Heart left ventricle (tissue), 16 donors: ENCODE measurements at regions of chr20 and their contacts with region 1.

Region 1: GRCh38 chr20:45254869-45255266 is 504 bp upstream of the SLPI start:
- DNase-seq: no peak
- ATAC-seq: peak in 2 of 4 donors; percentile 31 to 67
- H3K4me3 ChIP-seq: no peak overlapping the region
- H3K27ac ChIP-seq: no peak overlapping the region
- H3K4me1 ChIP-seq: peaks cover 0 to 16% (median 0%) of the 10 kb centered on the region in 12 donors
- H3K27me3 ChIP-seq: peaks cover 0 to 17% (median 0%) of the 10 kb centered on the region in 9 donors
- CTCF ChIP-seq: no peak
- POLR2A ChIP-seq: no peak

Region 2: GRCh38 chr20:45193331-45193730 is 61.5 kb before region 1 on chr20:
- intact Hi-C with region 1: loop called in 1 of 10 experiments (anchors 10 kb)
- DNase-seq: no peak
- ATAC-seq: no peak
- H3K4me3 ChIP-seq: no peak overlapping the region
- H3K27ac ChIP-seq: no peak overlapping the region
- H3K4me1 ChIP-seq: no peaks in the 10 kb centered on the region
- H3K27me3 ChIP-seq: peaks cover 0 to 11% (median 0%) of the 10 kb centered on the region in 9 donors
- CTCF ChIP-seq: no peak
- POLR2A ChIP-seq: no peak

Region 3: GRCh38 chr20:45595235-45595634 is 340.4 kb after region 1 on chr20:
- intact Hi-C with region 1: no loop called
- DNase-seq: no peak
- ATAC-seq: no peak
- H3K4me3 ChIP-seq: no peak overlapping the region
- H3K27ac ChIP-seq: no peak overlapping the region
- H3K4me1 ChIP-seq: no peaks in the 10 kb centered on the region
- H3K27me3 ChIP-seq: peaks cover 0 to 21% (median 4%) of the 10 kb centered on the region in 9 donors
- CTCF ChIP-seq: no peak
- POLR2A ChIP-seq: no peak